Activated B cell treated with CpG ODN at 0.5 μM for 24 hours (primary cell): ENCODE measurements at regions of chr5 and their contacts with region 1.

Region 1: DNA sequence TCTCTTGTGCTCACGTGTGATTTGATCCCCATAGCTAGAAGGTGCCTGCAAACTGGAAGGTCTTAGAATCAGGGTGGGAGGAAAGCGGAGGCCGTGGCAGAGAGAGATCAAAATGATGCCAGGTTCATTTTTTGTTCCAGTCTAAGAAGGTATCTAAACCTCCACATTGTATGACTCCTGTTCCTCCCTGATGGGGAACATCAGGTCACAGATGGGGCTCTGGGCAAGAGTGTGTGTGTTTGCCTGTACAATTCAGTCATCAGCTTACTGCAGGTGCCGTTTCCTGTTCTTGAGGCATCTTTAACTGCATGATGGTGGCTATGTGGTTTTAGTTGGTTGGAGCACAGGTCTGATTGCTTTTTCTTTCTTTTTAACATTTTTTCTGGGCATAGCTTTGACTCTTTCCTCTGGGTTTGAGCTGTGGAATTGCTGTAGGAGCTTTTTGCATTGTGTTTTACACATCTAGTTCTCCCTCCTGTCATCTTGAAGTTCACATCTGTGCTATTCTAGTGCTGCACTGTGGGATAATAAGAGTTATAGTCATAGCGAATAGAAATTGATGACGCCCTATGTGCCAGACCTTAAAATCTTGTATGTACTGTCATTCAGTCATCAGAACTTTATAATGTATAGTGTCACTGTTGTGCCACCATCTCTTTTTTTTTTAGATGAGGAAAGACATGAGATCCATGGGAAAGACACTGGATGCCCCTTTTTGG is 30.8 kb downstream of the ARHGAP26 start:
- DNase-seq: no peak
- ATAC-seq: peak; percentile 78
- H3K4me3 Mint-ChIP-seq: peak overlapping the region; percentile 64
- H3K27ac Mint-ChIP-seq: peak overlapping the region; percentile 84
- H3K4me1 Mint-ChIP-seq: peaks cover 63% of the 10 kb centered on the region
- H3K27me3 Mint-ChIP-seq: no peaks in the 10 kb centered on the region
- CTCF ChIP-seq: no peak

Region 2: DNA sequence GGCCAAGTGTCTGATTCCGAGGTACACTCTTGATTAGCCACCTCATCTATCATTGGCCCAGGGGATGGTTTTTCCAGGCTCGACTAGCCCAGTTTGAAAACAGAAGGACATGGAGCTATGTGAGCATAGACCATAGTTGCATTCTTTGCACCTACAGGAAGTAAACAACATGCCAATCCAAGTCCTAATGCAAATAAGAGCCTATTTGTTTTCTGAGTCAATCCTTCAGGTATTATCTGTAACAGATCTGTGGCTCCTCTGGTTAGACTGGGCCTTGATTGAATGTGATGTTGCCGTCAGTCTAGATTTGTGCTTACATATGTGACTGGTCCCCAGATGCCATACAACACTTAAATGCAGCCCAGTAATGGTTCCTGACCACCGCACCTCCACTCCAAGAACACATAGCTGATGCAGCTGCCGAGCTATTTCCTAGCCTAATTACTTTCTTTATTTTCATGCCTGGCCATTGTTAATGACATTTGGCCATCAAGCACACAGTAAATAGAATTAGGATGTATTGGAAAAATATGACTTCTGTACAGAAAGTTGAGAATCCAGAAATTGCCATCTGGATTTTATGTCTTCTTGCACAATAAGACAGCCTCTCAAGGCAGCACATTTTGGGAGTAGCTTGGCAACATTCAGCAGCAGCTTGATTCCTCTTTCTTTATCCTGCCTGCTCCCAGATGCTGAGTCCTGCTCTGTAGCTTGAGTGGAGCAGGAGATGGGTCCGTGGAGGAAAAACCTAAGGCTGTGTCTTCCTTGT is 60.3 kb before region 1 on chr5:
- CTCF ChIA-PET with region 1: no interaction called
- POLR2A ChIA-PET with region 1: no interaction called
- intact Hi-C with region 1: no loop called
- DNase-seq: no peak
- ATAC-seq: no peak
- H3K4me3 Mint-ChIP-seq: no peak overlapping the region
- H3K27ac Mint-ChIP-seq: no peak overlapping the region
- H3K4me1 Mint-ChIP-seq: no peaks in the 10 kb centered on the region
- H3K27me3 Mint-ChIP-seq: peaks cover 16% of the 10 kb centered on the region
- CTCF ChIP-seq: no peak

Region 3: DNA sequence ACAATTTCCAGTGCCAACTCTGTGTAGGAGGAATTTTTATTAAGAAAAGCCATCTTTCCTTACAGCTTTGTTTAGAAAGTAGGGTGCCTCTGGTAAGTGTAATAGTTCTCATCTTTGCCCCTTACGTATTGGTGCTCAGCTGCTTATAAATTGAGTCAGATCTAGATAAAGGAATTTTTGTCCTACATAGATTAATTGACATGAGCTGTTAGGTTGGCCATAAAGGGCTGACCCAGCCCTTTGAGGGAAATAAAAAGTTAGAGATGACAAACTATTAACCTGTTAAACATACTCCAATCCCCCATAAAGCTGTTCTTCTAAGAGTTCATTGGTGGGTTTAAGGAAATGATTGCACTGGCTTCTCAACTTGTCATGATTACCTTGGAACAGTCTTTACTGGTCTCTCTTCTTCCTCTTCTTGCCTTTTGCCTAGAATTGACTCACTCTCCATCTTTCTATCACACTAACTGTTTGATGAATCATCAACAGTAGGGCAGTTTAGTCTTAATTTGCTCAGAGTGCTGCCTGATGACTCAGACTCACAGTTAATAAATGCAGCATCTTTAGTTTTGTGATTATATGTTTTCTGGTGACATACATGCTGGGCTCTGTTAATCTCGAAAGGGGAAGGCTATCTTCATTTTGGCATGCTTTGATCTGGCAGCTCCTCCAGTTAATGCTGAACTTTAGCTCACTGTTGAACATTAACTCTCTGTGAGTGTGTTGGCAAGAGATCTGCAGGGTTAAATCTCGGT is 21.0 kb after region 1 on chr5:
- CTCF ChIA-PET with region 1: no interaction called
- POLR2A ChIA-PET with region 1: interaction called, 5 read pairs
- intact Hi-C with region 1: loop called (anchors 2 kb)
- DNase-seq: no peak
- ATAC-seq: peak; percentile 95
- H3K4me3 Mint-ChIP-seq: no peak overlapping the region
- H3K27ac Mint-ChIP-seq: no peak overlapping the region
- H3K4me1 Mint-ChIP-seq: peaks cover 5% of the 10 kb centered on the region
- H3K27me3 Mint-ChIP-seq: no peaks in the 10 kb centered on the region
- CTCF ChIP-seq: no peak

Region 4: GRCh38 chr5:142845402-142845921 is 44.5 kb after region 1 on chr5:
- CTCF ChIA-PET with region 1: no interaction called
- POLR2A ChIA-PET with region 1: no interaction called
- intact Hi-C with region 1: loop called (anchors 5 kb)
- DNase-seq: no peak
- ATAC-seq: peak; percentile 27
- H3K4me3 Mint-ChIP-seq: peak overlapping the region; percentile 24
- H3K27ac Mint-ChIP-seq: peak overlapping the region; percentile 51
- H3K4me1 Mint-ChIP-seq: peaks cover 32% of the 10 kb centered on the region
- H3K27me3 Mint-ChIP-seq: no peaks in the 10 kb centered on the region
- CTCF ChIP-seq: no peak